ENCODE measurements at regions of chr7 and their contacts with region 1.

Region 1: GRCh38 chr7:121000081-121000983 is 11.8 kb downstream of the CPED1 start:
- DNase-seq: no peak
- H3K4me3 ChIP-seq: no peak overlapping the region
- H3K27me3 ChIP-seq: no peaks in the 10 kb centered on the region
- CTCF ChIP-seq: no peak

Region 2: GRCh38 chr7:121016966-121017365 is 16.6 kb after region 1 on chr7:
- CTCF ChIA-PET with region 1: interaction called, 10 read pairs
- POLR2A ChIA-PET with region 1: no interaction called
- DNase-seq: peak; percentile 37
- H3K4me3 ChIP-seq: no peak overlapping the region
- H3K27me3 ChIP-seq: no peaks in the 10 kb centered on the region
- CTCF ChIP-seq: no peak